ENCODE measurements at regions of chr12 and their contacts with region 1.

Region 1: DNA sequence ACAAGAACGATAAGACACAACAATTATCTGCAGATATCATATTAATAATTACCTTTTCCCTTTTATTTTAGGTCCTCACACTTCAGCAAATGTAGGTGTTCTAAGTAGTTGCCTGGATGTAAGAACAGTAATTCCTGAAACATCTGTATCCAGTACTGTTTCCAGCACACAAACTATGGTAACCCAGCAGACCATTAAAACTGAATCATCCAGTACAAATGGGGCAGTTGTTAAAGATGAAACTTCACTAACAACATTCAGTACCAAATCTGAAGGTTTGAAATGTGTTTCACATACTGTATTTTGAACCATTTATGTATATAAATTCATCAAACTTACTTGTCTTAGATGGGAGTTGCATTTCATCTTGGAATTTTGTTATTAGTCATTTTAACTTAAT is 31.0 kb downstream of the HCFC2 start:
- DNase-seq: no peak
- H3K4me3 Mint-ChIP-seq: no peak overlapping the region
- H3K27ac Mint-ChIP-seq: no peak overlapping the region
- H3K4me1 Mint-ChIP-seq: no peaks in the 10 kb centered on the region
- H3K27me3 Mint-ChIP-seq: no peaks in the 10 kb centered on the region
- CTCF ChIP-seq: no peak

Region 2: GRCh38 chr12:103840876-103841689 is 254.2 kb before region 1 on chr12 and contains the start of gene NT5DC3:
- CTCF ChIA-PET with region 1: no interaction called
- intact Hi-C with region 1: no loop called
- DNase-seq: peak; percentile 92
- H3K4me3 Mint-ChIP-seq: peak within 1 kb of the TSS; percentile 90
- H3K27ac Mint-ChIP-seq: peak within 1 kb of the TSS; percentile 91
- H3K4me1 Mint-ChIP-seq: peaks cover 43% of the 10 kb centered on the region
- H3K27me3 Mint-ChIP-seq: no peaks in the 10 kb centered on the region
- CTCF ChIP-seq: no peak
- total RNA-seq, gene NT5DC3: 18.1 and 24.0 TPM in 2 replicates

Region 3: GRCh38 chr12:104182144-104182543 is 86.9 kb after region 1 on chr12:
- CTCF ChIA-PET with region 1: no interaction called
- intact Hi-C with region 1: no loop called
- DNase-seq: no peak
- H3K4me3 Mint-ChIP-seq: no peak overlapping the region
- H3K27ac Mint-ChIP-seq: no peak overlapping the region
- H3K4me1 Mint-ChIP-seq: peaks cover 15% of the 10 kb centered on the region
- H3K27me3 Mint-ChIP-seq: no peaks in the 10 kb centered on the region
- CTCF ChIP-seq: no peak

Region 4: GRCh38 chr12:104263580-104264358 is 168.5 kb after region 1 on chr12:
- CTCF ChIA-PET with region 1: no interaction called
- intact Hi-C with region 1: no loop called
- DNase-seq: no peak
- H3K4me3 Mint-ChIP-seq: no peak overlapping the region
- H3K27ac Mint-ChIP-seq: no peak overlapping the region
- H3K4me1 Mint-ChIP-seq: no peaks in the 10 kb centered on the region
- H3K27me3 Mint-ChIP-seq: no peaks in the 10 kb centered on the region
- CTCF ChIP-seq: no peak

Region 5: DNA sequence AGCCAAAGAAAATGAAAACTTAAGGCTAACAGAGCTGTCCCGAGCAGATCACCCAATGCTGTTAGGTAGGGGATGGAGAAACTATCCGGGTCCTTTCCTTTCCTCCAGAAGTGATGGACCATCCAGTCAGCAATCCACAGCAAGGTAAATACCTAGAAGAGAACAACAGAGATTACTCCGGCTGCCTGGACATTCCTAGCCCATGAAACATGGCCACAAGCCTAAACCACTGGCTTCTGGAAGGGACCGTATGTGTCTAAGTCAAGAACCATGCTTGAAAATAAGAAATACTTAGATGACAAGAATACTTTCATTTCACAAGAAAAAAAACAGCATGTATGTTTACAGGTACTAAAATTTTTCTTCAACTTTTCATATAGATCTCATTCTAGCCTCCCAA is 709.9 kb after region 1 on chr12:
- CTCF ChIA-PET with region 1: no interaction called
- intact Hi-C with region 1: loop called (anchors 5 kb)
- DNase-seq: no peak
- H3K4me3 Mint-ChIP-seq: no peak overlapping the region
- H3K27ac Mint-ChIP-seq: no peak overlapping the region
- H3K4me1 Mint-ChIP-seq: peaks cover 9% of the 10 kb centered on the region
- H3K27me3 Mint-ChIP-seq: no peaks in the 10 kb centered on the region
- CTCF ChIP-seq: no peak

Measured in Calu3 (cell line).